GM12878 (cell line): ENCODE measurements at regions of chr14 and their contacts with region 1.

Region 1: DNA sequence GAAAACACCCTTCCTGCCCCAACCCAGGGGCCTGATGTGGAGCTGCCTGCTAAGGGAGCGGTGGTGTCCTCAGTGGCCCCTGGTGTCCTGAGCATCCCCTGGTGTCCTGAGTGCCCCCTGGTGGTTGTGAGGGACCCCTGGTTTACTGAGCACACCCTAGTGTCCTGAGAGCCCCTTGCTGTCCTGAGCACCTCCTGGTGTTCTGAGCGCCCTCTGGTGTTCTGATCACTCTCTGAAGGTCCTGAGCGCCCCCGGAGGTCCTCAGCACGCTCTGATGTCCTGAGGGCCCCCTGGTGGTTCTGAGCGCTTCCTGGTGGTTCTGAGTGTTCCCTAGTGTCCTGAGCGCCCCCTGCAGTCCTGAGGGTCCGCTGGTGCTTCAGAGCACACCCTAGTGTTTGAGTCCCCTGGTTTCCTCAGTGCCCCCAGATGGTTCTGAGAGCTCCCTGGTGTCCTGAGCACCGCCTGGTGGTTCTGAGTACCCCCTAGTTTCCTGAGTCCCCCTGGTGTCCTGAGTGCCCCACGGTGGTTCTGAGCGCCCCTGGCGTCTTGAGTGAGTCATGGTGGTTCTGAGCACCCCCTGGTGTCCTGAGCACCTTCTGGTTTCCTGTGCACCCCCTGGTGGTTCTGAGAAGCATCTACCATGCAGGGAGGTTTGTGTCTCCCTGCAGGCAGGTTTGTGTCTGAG is 1004.2 kb downstream of the TMEM121 start:
- DNase-seq: peak; percentile 51
- ATAC-seq: peak; percentile 97
- H3K4me3 ChIP-seq: no peak overlapping the region
- H3K27ac ChIP-seq: no peak overlapping the region
- H3K4me1 ChIP-seq: peaks cover 8% of the 10 kb centered on the region
- H3K27me3 ChIP-seq: no peaks in the 10 kb centered on the region
- CTCF ChIP-seq: peak; percentile 79 to 91 (median 88)
- EP300 ChIP-seq: no peak
- POLR2A ChIP-seq: no peak
- RAD21 ChIP-seq: peak; percentile 51; the same call in 1 of the 2 replicates

Region 2: DNA sequence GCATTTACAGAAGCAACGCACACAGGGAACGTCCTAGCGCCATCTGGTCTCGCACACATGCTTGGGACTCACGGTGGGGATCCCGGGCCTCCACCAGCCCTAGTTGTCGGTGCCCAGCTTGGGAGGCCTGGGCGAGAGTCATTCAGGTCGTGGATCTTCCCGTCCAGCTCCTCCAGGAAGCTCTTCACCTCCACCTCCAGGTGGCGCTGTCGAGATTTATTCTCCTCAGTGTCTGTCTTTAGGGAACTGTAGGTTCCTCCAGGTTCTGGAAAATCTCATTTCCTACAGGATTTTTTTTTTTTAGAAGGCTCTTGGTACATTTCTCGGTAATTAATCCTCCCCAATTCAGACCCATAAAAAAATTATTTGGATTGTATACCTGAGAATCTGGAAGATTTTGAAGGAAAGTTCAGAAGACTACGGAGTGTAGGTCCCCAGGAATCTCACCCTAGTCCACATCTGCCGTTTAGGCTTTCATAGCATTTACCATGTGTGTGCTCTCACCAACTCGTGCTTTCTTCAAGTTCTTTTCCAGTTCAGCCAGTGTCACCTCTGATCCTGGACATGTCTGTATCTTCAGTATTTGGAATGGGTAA is 94.2 kb before region 1 on chr14:
- CTCF ChIA-PET with region 1: interaction called, 82 read pairs
- POLR2A ChIA-PET with region 1: no interaction called
- RAD21 ChIA-PET with region 1: interaction called, 14 read pairs
- SMC1A ChIA-PET with region 1: interaction called, 19 read pairs
- in situ Hi-C with region 1: no loop called
- intact Hi-C with region 1: loop called (anchors 5 kb)
- DNase-seq: no peak
- ATAC-seq: peak; percentile 68
- H3K4me3 ChIP-seq: no peak overlapping the region
- H3K27ac ChIP-seq: no peak overlapping the region
- H3K4me1 ChIP-seq: no peaks in the 10 kb centered on the region
- H3K27me3 ChIP-seq: peaks cover 0 to 6% of the 10 kb centered on the region in 2 experiments; a peak in 2 of 4 replicates
- CTCF ChIP-seq: peak; percentile 58 to 83 (median 70)
- EP300 ChIP-seq: no peak
- POLR2A ChIP-seq: no peak
- RAD21 ChIP-seq: peak; percentile 64

Region 3: DNA sequence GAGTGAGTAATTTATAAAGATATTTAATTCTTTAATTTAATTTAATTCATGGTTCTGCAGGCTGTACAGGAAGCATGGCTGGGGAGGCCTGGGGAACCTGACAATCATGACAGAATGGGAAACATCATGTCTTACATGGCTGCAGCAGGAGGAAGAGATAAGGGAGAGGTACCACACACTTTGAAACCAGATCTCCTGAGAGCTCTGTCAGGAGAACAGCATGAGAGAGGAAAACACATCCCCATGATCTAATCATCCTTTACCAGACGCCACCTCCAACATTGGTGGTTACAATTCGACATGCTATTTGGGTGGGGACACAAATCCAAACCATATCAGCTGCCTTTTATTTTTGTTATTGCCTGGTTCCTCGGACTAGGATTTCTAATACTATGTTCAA is 75.5 kb before region 1 on chr14:
- CTCF ChIA-PET with region 1: interaction called, 12 read pairs
- POLR2A ChIA-PET with region 1: no interaction called
- RAD21 ChIA-PET with region 1: no interaction called
- SMC1A ChIA-PET with region 1: interaction called, 3 read pairs
- in situ Hi-C with region 1: no loop called
- intact Hi-C with region 1: no loop called
- DNase-seq: no peak
- ATAC-seq: no peak
- H3K4me3 ChIP-seq: no peak overlapping the region
- H3K27ac ChIP-seq: no peak overlapping the region
- H3K4me1 ChIP-seq: no peaks in the 10 kb centered on the region
- H3K27me3 ChIP-seq: no peaks in the 10 kb centered on the region
- CTCF ChIP-seq: no peak
- EP300 ChIP-seq: no peak
- POLR2A ChIP-seq: no peak
- RAD21 ChIP-seq: no peak

Region 4: GRCh38 chr14:106511006-106511799 is 19.4 kb before region 1 on chr14:
- CTCF ChIA-PET with region 1: interaction called, 37 read pairs
- POLR2A ChIA-PET with region 1: interaction called, 3 read pairs
- RAD21 ChIA-PET with region 1: interaction called, 10 read pairs
- SMC1A ChIA-PET with region 1: interaction called, 22 read pairs
- in situ Hi-C with region 1: no loop called
- intact Hi-C with region 1: no loop called
- DNase-seq: no peak
- ATAC-seq: peak; percentile 78
- H3K4me3 ChIP-seq: no peak overlapping the region
- H3K27ac ChIP-seq: no peak overlapping the region
- H3K4me1 ChIP-seq: no peaks in the 10 kb centered on the region
- H3K27me3 ChIP-seq: peaks cover 0 to 2% of the 10 kb centered on the region in 2 experiments; a peak in 2 of 4 replicates
- CTCF ChIP-seq: no peak
- EP300 ChIP-seq: no peak
- POLR2A ChIP-seq: no peak
- RAD21 ChIP-seq: no peak

Region 5: DNA sequence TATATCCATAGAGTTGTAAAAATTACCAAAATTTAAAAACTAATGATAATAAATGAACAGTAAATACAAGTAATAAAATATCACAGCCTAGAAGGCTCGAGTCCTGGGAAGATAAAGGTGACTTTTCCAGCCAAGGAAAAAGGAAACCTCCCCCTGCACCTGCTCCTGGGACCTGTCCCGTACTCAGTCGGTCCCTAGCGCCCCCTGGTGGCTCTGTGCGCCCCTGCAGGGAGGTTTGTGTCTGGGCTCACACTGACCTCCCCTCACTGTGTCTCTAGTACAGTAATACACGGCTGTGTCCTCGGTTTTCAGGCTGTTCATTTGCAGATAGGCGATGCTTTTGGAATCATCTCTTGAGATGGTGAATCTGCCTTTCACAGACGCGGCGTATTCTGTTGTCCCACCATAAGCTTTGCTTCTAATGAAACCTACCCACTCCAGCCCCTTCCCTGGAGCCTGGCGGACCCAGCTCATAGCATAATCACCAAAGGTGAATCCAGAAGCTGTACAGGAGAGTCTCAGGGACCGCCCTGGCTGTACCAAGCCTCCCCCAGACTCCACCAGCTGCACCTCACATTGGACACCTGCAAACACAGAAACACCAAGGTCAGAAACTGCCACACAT is 26.2 kb after region 1 on chr14:
- CTCF ChIA-PET with region 1: interaction called, 92 read pairs
- POLR2A ChIA-PET with region 1: no interaction called
- RAD21 ChIA-PET with region 1: interaction called, 4 read pairs
- SMC1A ChIA-PET with region 1: interaction called, 7 read pairs
- in situ Hi-C with region 1: no loop called
- intact Hi-C with region 1: no loop called
- DNase-seq: no peak
- ATAC-seq: peak; percentile 89
- H3K4me3 ChIP-seq: no peak overlapping the region
- H3K27ac ChIP-seq: no peak overlapping the region
- H3K4me1 ChIP-seq: no peaks in the 10 kb centered on the region
- H3K27me3 ChIP-seq: no peaks in the 10 kb centered on the region
- CTCF ChIP-seq: peak; percentile 71 to 94 (median 93)
- EP300 ChIP-seq: no peak
- POLR2A ChIP-seq: no peak
- RAD21 ChIP-seq: peak; percentile 73

Region 6: GRCh38 chr14:106586098-106586704 is 55.6 kb after region 1 on chr14:
- CTCF ChIA-PET with region 1: interaction called, 20 read pairs
- POLR2A ChIA-PET with region 1: no interaction called
- RAD21 ChIA-PET with region 1: no interaction called
- SMC1A ChIA-PET with region 1: no interaction called
- in situ Hi-C with region 1: no loop called
- intact Hi-C with region 1: no loop called
- DNase-seq: no peak
- ATAC-seq: peak; percentile 100
- H3K4me3 ChIP-seq: no peak overlapping the region
- H3K27ac ChIP-seq: no peak overlapping the region
- H3K4me1 ChIP-seq: peaks cover 6% of the 10 kb centered on the region
- H3K27me3 ChIP-seq: no peaks in the 10 kb centered on the region
- CTCF ChIP-seq: peak; percentile 72 to 94 (median 90)
- EP300 ChIP-seq: no peak
- POLR2A ChIP-seq: no peak
- RAD21 ChIP-seq: peak; percentile 63; the same call in 1 of the 2 replicates